IMR-90 (cell line): ENCODE measurements at regions of chr12 and their contacts with region 1.

Region 1: GRCh38 chr12:76455582-76456345 is 103.8 kb downstream of the OSBPL8 start:
- DNase-seq: peak; percentile 95
- ATAC-seq: peak; percentile 95
- H3K4me3 ChIP-seq: no peak overlapping the region
- H3K27ac ChIP-seq: no peak overlapping the region
- H3K4me1 ChIP-seq: peaks cover 2% of the 10 kb centered on the region; the same call in 1 of the 2 replicates
- H3K27me3 ChIP-seq: no peaks in the 10 kb centered on the region
- CTCF ChIP-seq: peak; percentile 79
- POLR2A ChIP-seq: no peak
- RAD21 ChIP-seq: peak; percentile 83

Region 2: GRCh38 chr12:75511116-75512048 is 944.4 kb before region 1 on chr12 and contains the start of gene KRR1:
- CTCF ChIA-PET with region 1: no interaction called
- POLR2A ChIA-PET with region 1: no interaction called
- dilution Hi-C with region 1: no loop called
- in situ Hi-C with region 1: no loop called
- intact Hi-C with region 1: loop called (anchors 10 kb)
- DNase-seq: peak; percentile 99
- ATAC-seq: peak; percentile 97
- H3K4me3 ChIP-seq: peak within 1 kb of the TSS; percentile 60
- H3K27ac ChIP-seq: peak within 1 kb of the TSS; percentile 66
- H3K4me1 ChIP-seq: 0 out of 2 replicates have a peak, but pooled peaks cover 1% of the 10 kb centered on the region
- H3K27me3 ChIP-seq: no peaks in the 10 kb centered on the region
- CTCF ChIP-seq: no peak
- POLR2A ChIP-seq: peak; percentile 76
- RAD21 ChIP-seq: no peak; the same call in none of the 2 replicates
- total RNA-seq, gene KRR1: 31.4 and 40.0 TPM in 2 replicates

Region 3: GRCh38 chr12:76074701-76075336 is 380.9 kb before region 1 on chr12:
- CTCF ChIA-PET with region 1: no interaction called
- POLR2A ChIA-PET with region 1: no interaction called
- dilution Hi-C with region 1: no loop called
- in situ Hi-C with region 1: loop called (anchors 25 kb)
- intact Hi-C with region 1: loop called (anchors 5 kb)
- DNase-seq: no peak
- ATAC-seq: no peak
- H3K4me3 ChIP-seq: no peak overlapping the region
- H3K27ac ChIP-seq: peak overlapping the region; percentile 29; the same call in 1 of the 2 replicates
- H3K4me1 ChIP-seq: peaks cover 5% of the 10 kb centered on the region
- H3K27me3 ChIP-seq: no peaks in the 10 kb centered on the region
- CTCF ChIP-seq: no peak
- POLR2A ChIP-seq: no peak
- RAD21 ChIP-seq: no peak

Region 4: GRCh38 chr12:76790564-76791552 is 335.1 kb after region 1 on chr12:
- CTCF ChIA-PET with region 1: no interaction called
- POLR2A ChIA-PET with region 1: no interaction called
- dilution Hi-C with region 1: no loop called
- in situ Hi-C with region 1: no loop called
- intact Hi-C with region 1: no loop called
- DNase-seq: peak; percentile 37
- ATAC-seq: no peak
- H3K4me3 ChIP-seq: no peak overlapping the region
- H3K27ac ChIP-seq: no peak overlapping the region
- H3K4me1 ChIP-seq: no peaks in the 10 kb centered on the region; the same call in 1 of the 2 replicates
- H3K27me3 ChIP-seq: no peaks in the 10 kb centered on the region
- CTCF ChIP-seq: peak; percentile 72
- POLR2A ChIP-seq: no peak
- RAD21 ChIP-seq: peak; percentile 84